ENCODE measurements at regions of chr5 and their contacts with region 1.

Region 1: DNA sequence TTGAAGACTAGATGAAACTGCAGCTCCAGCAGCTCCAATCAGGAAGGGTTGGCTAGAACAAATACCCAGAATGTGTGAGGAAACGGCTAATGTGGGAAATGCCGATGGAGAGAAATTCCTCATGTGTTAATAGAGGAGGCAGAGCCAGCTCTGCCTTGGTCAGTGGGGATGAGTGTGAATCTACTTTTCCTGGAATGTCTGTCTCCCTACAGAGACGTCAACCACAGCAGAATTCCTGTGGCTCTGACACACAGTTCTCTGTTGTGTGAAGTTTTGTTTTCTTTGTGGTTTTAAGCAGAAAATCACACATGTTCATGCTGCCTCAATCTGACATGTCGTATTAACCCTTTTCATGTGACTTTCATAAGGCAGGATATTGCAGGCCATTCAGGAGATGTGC is 476.6 kb upstream of the WWC1 start:
- DNase-seq: peak; percentile 99
- H3K4me3 ChIP-seq: no peak overlapping the region
- H3K27ac ChIP-seq: peak overlapping the region; percentile 100
- H3K4me1 ChIP-seq: peaks cover 51% of the 10 kb centered on the region
- H3K27me3 ChIP-seq: no peaks in the 10 kb centered on the region
- CTCF ChIP-seq: no peak

Region 2: DNA sequence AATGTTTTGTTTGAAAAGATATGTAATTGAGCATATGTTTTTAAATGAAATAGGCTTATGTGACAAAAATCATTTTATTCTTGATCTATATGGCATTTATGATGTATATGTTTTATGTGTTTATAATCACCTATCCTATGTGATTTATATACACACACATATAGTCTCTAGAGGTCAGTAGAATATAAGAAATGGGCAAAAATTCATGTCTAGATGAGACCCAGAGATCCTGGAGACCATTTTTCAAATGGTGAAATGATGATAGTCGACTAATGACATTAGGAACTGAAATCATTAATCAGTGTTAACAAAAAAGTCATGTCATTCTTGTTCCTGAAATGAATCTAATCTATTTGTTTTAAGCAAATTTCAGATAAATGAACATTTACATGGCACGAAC is 232.5 kb before region 1 on chr5:
- CTCF ChIA-PET with region 1: no interaction called
- dilution Hi-C with region 1: no loop called
- in situ Hi-C with region 1: no loop called
- intact Hi-C with region 1: loop called (anchors 5 kb)
- DNase-seq: peak; percentile 10
- H3K4me3 ChIP-seq: no peak overlapping the region
- H3K27ac ChIP-seq: no peak overlapping the region
- H3K4me1 ChIP-seq: no peaks in the 10 kb centered on the region
- H3K27me3 ChIP-seq: no peaks in the 10 kb centered on the region
- CTCF ChIP-seq: peak; percentile 29 to 41

Region 3: DNA sequence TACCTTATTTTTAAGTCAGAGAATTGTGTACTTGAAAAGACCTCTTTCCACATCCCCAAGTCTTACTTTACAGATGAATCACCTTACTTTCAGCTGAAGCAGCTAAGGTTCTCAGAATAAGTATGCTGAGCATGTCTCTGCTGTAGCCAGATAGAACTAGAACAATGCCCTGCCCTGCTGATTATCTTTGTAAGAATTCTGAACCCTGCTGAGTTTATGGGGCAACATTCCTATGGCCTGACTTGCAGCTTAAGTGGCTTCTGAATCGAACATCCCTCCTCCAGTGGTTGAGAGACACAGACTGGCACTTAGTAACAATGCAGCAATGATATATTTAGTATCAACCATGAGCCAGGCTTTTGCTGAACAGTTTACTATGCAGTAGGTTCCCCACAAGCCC is 115.4 kb before region 1 on chr5:
- CTCF ChIA-PET with region 1: no interaction called
- dilution Hi-C with region 1: no loop called
- in situ Hi-C with region 1: no loop called
- intact Hi-C with region 1: loop called (anchors 1 kb)
- DNase-seq: peak; percentile 99
- H3K4me3 ChIP-seq: no peak overlapping the region
- H3K27ac ChIP-seq: peak overlapping the region; percentile 100
- H3K4me1 ChIP-seq: peaks cover 34% of the 10 kb centered on the region
- H3K27me3 ChIP-seq: no peaks in the 10 kb centered on the region
- CTCF ChIP-seq: no peak

Region 4: DNA sequence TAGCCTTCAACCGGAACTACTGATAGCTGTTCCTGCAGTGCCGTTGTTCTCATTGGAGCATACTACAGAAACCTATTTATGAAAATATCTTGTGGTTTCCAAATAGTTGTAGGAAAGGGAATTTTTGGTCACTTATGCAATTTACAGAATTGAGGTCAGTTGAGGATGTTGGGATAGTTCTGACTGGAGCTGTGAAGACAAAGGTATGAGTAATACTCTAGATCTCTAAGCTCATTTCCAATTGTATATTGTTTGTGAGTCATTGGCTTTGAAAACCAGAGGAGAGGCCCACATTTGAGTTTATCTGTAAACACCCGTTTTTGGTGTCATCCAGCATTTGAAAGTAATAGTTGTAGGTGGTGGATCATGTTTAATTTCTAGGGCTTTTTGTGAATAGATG is 84.7 kb before region 1 on chr5:
- CTCF ChIA-PET with region 1: no interaction called
- dilution Hi-C with region 1: no loop called
- in situ Hi-C with region 1: loop called in 1 of 2 experiments (anchors 10 kb)
- intact Hi-C with region 1: no loop called
- DNase-seq: peak; percentile 90
- H3K4me3 ChIP-seq: no peak overlapping the region
- H3K27ac ChIP-seq: peak overlapping the region; percentile 81
- H3K4me1 ChIP-seq: peaks cover 26% of the 10 kb centered on the region
- H3K27me3 ChIP-seq: no peaks in the 10 kb centered on the region
- CTCF ChIP-seq: no peak

Region 5: DNA sequence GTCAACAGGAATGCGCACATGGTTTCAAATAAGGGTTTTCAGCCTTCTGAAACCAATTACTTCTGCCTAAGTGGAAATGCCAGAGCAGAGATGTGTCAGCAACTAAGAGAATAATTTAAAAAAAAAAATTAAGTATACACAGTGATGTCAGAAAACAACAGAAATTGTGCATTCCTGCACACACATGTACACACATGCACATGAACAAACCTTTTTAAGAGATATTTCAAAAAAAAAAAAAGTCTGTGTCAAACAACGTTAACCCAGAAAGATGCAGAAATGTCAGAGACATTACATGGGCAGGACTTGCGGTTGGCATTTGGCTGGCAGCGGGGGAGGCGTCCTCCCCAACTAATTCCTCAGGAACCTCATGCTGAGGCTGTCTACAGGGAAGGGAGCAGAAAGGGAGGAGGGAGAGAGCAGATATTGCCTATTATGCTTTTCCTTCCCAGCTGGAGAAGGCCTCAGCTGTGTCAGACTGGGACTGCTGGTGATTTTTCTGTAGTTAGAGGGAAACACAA is 60.3 kb before region 1 on chr5:
- CTCF ChIA-PET with region 1: no interaction called
- dilution Hi-C with region 1: no loop called
- in situ Hi-C with region 1: no loop called
- intact Hi-C with region 1: loop called (anchors 1 kb)
- DNase-seq: no peak
- H3K4me3 ChIP-seq: no peak overlapping the region
- H3K27ac ChIP-seq: no peak overlapping the region
- H3K4me1 ChIP-seq: peaks cover 15% of the 10 kb centered on the region
- H3K27me3 ChIP-seq: no peaks in the 10 kb centered on the region
- CTCF ChIP-seq: no peak

Region 6: DNA sequence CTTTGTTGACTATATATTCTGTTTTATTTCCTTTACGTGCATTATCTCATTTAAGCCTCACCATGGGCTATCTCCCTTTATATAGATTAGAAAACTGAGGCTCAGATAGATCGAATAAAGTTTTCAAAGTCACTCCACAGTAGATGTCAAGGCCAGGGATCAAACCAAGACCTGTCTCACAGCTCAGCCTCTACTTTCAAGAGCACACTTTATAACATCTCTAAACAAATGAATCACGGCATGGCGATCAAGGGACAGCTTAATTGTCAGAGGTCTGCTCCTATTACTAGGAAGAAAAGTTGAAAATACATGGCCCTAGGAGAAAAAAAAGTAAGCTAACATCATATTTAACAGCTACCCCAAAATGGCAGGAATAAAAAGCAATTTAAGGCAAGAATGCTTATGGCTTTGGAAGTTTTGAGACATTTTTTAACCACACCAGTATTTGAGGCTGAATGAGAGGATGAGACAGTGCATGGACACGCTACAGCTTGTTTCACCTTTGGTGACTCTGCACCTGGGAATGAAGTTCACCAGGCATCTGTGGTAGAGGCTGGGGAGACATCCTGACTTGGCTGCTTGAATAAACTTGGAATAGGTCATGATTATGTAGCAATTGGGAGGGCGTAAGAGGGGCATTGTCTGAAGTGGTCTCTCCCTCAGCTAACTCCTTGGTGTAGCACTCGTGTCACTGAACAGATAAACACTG is 10.2 kb before region 1 on chr5:
- CTCF ChIA-PET with region 1: no interaction called
- dilution Hi-C with region 1: no loop called
- in situ Hi-C with region 1: no loop called
- intact Hi-C with region 1: loop called (anchors 1 kb)
- DNase-seq: peak; percentile 95
- H3K4me3 ChIP-seq: no peak overlapping the region
- H3K27ac ChIP-seq: peak overlapping the region; percentile 96
- H3K4me1 ChIP-seq: peaks cover 41% of the 10 kb centered on the region
- H3K27me3 ChIP-seq: no peaks in the 10 kb centered on the region
- CTCF ChIP-seq: no peak

Region 7: DNA sequence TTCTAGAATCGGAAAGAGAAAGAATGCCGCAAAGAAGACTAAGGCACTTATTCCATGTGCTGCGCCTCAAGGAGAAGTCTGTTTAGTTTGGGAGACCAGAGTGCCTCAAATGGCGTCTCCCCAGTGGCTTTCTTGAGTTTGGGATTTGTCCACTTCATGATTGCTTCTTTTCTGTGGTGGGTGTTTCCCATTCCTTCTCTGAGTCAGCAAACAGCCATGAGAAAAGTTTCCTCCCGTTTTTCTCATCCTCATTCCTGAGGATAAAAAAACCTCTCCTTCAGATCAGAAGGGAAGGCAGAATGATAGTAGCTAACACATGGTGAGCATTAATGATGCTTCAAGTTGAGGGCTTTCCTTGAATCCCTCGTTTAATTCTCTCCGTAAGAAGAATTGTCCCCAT is 200.7 kb after region 1 on chr5:
- CTCF ChIA-PET with region 1: no interaction called
- dilution Hi-C with region 1: no loop called
- in situ Hi-C with region 1: no loop called
- intact Hi-C with region 1: loop called (anchors 5 kb)
- DNase-seq: no peak
- H3K4me3 ChIP-seq: no peak overlapping the region
- H3K27ac ChIP-seq: no peak overlapping the region
- H3K4me1 ChIP-seq: no peaks in the 10 kb centered on the region
- H3K27me3 ChIP-seq: no peaks in the 10 kb centered on the region
- CTCF ChIP-seq: no peak